Left ventricle myocardium inferior (tissue), 1 donor: ENCODE measurements at regions of chr5 and their contacts with region 1.

Region 1: DNA sequence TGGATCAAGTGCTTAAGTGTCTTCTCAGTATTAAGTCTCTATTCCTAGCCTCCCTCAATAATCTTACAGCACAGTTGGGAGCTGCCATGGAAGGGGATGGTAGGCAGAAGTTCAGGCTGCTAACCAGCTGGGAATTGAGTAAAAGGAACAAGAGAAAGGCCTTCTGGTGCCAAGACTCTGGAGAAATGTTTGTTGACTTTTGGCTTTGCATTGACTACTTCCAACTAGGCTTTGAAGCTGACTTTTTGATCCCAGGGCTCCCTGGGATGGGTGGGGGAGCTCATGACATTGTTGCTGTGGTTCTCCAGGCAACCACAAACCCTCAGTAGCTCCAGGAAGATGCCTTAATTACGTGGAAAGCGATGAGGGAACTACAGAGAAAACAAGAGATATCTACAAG is 85.2 kb upstream of the HTR4 start:
- DNase-seq: no peak
- H3K4me3 ChIP-seq: no peak overlapping the region
- H3K27ac ChIP-seq: no peak overlapping the region
- H3K4me1 ChIP-seq: peaks cover 39% of the 10 kb centered on the region
- H3K27me3 ChIP-seq: no peaks in the 10 kb centered on the region
- CTCF ChIP-seq: no peak

Region 2: DNA sequence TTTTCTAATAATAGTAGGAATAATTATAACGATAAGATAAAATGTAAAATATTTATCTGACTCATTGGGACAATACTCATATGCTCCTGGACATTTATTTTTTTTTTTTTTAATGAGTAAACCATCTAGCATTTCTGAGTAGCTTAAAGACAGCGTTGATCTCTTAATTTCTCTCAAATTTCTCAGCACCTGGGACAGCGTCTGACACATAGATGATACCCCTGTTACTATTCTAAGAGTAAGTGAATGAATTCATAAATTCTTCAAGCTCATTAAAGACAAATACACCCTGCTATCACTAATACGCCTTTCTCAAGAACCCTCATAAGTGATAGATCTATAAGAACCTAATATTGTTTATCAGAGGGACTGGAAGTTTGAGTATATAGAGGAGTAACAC is 73.2 kb before region 1 on chr5:
- intact Hi-C with region 1: no loop called
- DNase-seq: no peak
- H3K4me3 ChIP-seq: no peak overlapping the region
- H3K27ac ChIP-seq: no peak overlapping the region
- H3K4me1 ChIP-seq: no peaks in the 10 kb centered on the region
- H3K27me3 ChIP-seq: peaks cover 9% of the 10 kb centered on the region
- CTCF ChIP-seq: no peak

Region 3: GRCh38 chr5:149030392-149030791 is 290.9 kb after region 1 on chr5:
- intact Hi-C with region 1: loop called (anchors 5 kb)
- DNase-seq: no peak
- H3K4me3 ChIP-seq: no peak overlapping the region
- H3K27ac ChIP-seq: no peak overlapping the region
- H3K4me1 ChIP-seq: peaks cover 1% of the 10 kb centered on the region
- H3K27me3 ChIP-seq: no peaks in the 10 kb centered on the region
- CTCF ChIP-seq: no peak

Region 4: DNA sequence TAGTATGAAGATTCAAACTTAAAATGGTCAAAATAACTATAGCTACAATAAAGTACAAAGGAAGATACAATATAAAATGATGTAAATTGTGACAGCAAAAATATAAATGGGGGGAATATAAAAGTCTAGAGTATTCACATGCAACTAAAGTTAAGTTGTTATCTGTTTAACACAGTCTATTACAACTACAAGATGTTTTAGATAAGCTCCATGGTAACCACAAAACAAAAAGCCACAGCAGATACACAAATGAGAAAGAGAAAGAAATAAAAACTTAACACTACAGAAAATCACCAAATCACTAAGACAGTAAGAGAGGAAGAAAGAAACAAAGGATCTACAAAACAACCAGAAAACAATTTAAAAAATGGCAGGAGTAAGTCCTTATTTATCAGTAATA is 340.4 kb after region 1 on chr5:
- intact Hi-C with region 1: no loop called
- DNase-seq: no peak
- H3K4me3 ChIP-seq: no peak overlapping the region
- H3K27ac ChIP-seq: no peak overlapping the region
- H3K4me1 ChIP-seq: no peaks in the 10 kb centered on the region
- H3K27me3 ChIP-seq: no peaks in the 10 kb centered on the region
- CTCF ChIP-seq: no peak